Dorsolateral prefrontal cortex (tissue), 120 donors: ENCODE measurements at regions of chr16 and their contacts with region 1.

Region 1: GRCh38 chr16:15857724-15858560 is 1.1 kb upstream of the MYH11 start:
- DNase-seq: peak in 1 of 10 donors; percentile 45
- H3K4me3 ChIP-seq: peak overlapping the region in 57 of 59 donors; percentile 9 to 64 (median 45)
- H3K27ac ChIP-seq: peak overlapping the region in 2 of 59 donors; percentile 18 to 41
- H3K27me3 ChIP-seq: peaks cover 0 to 47% (median 21%) of the 10 kb centered on the region in 45 donors
- CTCF ChIP-seq: no peak

Region 2: GRCh38 chr16:15777533-15778203 is 80.3 kb before region 1 on chr16:
- intact Hi-C with region 1: loop called in 1 of 2 experiments (anchors 10 kb)
- DNase-seq: no peak
- H3K4me3 ChIP-seq: no peak overlapping the region
- H3K27ac ChIP-seq: no peak overlapping the region
- H3K27me3 ChIP-seq: peaks cover 0 to 15% (median 0%) of the 10 kb centered on the region in 45 donors
- CTCF ChIP-seq: peak in 2 of 56 donors; percentile 7 to 16

Region 3: GRCh38 chr16:15829460-15829859 is 28.5 kb before region 1 on chr16:
- intact Hi-C with region 1: no loop called
- DNase-seq: no peak
- H3K4me3 ChIP-seq: no peak overlapping the region
- H3K27ac ChIP-seq: no peak overlapping the region
- H3K27me3 ChIP-seq: peaks cover 0 to 14% (median 0%) of the 10 kb centered on the region in 45 donors
- CTCF ChIP-seq: no peak

Region 4: DNA sequence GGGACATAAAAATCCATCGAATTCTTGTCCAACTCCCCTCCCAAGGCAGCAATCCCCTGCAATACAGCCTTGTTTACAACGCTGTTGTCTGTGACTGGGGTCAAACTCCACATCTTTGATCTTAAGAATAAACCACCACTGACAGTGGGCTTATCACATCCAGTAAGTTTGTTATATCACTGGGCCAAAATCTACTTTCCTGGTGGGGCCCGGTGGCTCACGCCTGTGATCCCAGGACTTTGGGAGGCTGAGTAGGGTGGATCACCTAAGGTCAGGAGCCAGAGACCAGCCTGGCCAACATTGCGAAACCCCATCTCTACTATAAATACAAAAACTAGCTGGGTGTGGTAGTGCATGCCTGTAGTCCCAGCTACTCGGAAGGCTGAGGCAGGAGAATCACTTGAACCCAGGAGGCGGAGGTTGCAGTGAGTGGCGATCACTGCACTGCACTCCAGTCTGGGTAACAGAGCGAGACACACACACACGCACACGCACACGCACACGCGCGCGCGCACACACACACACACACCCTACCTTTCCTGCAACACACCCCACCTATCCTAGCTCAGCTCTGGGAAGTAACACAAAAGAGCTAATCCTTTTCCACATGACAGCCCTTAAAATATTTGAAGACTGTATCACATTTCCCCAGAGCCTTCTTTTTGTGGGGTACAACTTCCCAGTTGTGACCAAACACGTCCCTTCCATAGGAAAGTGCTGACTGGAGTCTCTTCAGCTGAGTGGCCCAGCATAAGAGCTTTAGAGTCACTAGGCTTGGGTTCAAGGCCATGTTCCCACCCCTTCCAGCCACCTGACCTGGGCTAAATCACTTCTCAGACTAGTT is 70.5 kb after region 1 on chr16:
- intact Hi-C with region 1: loop called in 1 of 2 experiments (anchors 10 kb)
- DNase-seq: no peak
- H3K4me3 ChIP-seq: no peak overlapping the region
- H3K27ac ChIP-seq: no peak overlapping the region
- H3K27me3 ChIP-seq: no peaks in the 10 kb centered on the region
- CTCF ChIP-seq: no peak